Adrenal gland (tissue), 19 donors: ENCODE measurements at regions of chr1 and their contacts with region 1.

Region 1: DNA sequence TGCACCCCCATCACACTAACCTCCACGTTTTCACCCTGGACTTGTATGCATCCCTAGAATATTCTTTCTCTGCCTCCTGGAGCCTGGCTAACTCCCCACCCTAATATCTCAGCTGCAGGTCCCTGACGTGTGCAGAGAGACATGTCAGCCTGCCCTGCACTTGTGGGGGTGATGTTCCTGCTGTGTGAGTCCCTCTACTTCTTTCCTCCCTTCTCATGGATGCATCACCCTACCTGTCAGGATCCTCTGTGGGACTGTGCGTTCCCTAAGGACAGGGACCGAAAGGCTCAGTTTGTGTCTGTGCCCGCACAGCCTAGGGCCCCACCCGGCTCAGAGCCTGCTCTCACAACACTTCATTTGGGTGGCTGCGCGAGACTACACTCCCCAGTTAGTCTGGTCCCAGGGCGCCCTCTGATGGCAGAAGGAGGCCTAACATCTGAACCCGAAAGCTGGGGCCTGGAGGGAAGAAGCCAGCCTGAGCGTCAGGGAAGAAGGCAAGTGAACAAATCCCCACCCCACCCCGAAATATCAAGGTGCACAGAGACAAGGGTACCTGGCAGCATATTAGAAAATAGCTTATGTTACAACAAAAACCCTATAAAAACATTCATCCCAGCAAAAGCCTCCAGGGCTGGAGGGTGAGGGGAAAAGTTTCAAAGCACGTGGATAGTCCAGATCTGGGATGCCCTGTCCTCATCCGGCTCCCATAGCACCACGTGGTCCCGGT is 3.7 kb downstream of the CD52 start:
- DNase-seq: peak; percentile 88 to 95 (median 92)
- H3K4me3 ChIP-seq: no peak overlapping the region
- H3K27ac ChIP-seq: no peak overlapping the region
- H3K4me1 ChIP-seq: no peaks in the 10 kb centered on the region
- H3K27me3 ChIP-seq: no peaks in the 10 kb centered on the region
- CTCF ChIP-seq: peak; percentile 74 to 96 (median 90)
- POLR2A ChIP-seq: no peak

Region 2: DNA sequence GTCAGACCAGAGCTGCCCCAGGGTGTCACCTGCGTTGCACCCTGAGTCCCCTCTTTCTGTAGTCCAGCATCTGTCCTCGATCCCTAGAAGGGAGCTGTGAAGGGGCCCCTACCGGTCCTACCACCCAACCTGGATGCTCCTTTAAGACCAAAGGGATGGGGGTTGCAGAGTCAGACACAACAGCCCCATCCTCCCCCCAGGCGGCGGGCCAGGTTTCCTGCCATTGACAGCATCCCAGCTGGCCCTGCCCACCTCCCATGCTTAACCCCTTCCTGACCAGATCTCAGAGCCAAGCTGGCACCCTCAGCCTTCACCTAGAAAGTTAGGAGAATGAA is 164.8 kb before region 1 on chr1:
- intact Hi-C with region 1: no loop called
- DNase-seq: peak in 3 of 7 donors; percentile 48 to 53 (median 52)
- H3K4me3 ChIP-seq: no peak overlapping the region
- H3K27ac ChIP-seq: peak overlapping the region in 1 of 5 donors; percentile 74
- H3K4me1 ChIP-seq: peaks cover 6% of the 10 kb centered on the region in 2 donors
- H3K27me3 ChIP-seq: peaks cover 21% of the 10 kb centered on the region
- CTCF ChIP-seq: no peak
- POLR2A ChIP-seq: no peak

Region 3: DNA sequence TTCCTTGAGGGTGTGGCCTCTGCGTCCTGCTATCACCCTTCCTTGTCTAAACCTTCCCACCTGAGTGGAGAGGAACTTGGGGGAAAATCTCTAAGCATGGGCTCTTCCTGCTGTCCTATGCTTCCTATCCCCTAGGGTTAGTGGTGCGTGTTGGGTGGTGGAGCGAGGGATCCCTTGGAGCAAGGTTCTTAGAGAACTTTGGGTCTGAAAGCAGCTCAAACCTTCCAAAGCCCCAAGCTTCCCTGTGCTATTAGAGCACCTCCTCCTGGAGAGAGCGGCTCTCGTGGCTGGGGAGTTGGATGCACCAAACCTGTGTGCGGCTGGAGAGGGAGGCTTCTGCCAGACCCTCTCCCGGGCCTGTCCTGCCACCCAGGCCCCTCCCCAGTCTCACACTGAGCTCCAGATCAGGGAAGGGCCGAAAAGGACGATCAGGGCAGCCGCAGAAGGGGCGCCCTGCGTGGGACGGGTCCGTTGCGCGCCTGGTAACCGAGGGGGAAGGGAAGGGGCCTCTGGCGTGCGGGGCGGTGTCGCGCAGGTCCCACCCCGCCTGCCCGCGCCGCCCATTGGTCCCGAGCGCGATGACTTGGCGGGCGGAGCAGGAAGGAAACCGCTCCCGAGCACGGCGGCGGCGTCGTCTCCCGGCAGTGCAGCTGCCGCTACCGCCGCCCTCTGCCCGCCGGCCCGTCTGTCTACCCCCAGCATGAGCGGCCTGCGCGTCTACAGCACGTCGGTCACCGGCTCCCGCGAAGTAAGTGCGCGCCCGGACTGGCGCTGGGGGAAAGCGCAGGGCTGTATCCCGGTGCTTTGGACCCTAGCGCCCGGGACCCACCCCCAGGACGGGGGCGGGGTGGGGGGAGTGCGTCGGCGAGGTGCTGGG is 41.8 kb before region 1 on chr1 and contains the start of gene SH3BGRL3:
- intact Hi-C with region 1: loop called (anchors 2 to 5 kb)
- DNase-seq: peak; percentile 83 to 91 (median 87)
- H3K4me3 ChIP-seq: peak within 1 kb of the TSS in 3 of 4 donors; percentile 77 to 87 (median 80)
- H3K27ac ChIP-seq: peak within 1 kb of the TSS; percentile 52 to 97 (median 83)
- H3K4me1 ChIP-seq: peaks cover 14 to 47% of the 10 kb centered on the region in 2 donors
- H3K27me3 ChIP-seq: no peaks in the 10 kb centered on the region
- CTCF ChIP-seq: peak in 4 of 6 experiments; percentile 21 to 29 (median 25)
- POLR2A ChIP-seq: peak; percentile 78 to 91
- total RNA-seq, gene SH3BGRL3: 21.0 to 123 (median 72.5) TPM